HAP-1 (cell line): ENCODE measurements at regions of chr5 and their contacts with region 1.

Region 1: DNA sequence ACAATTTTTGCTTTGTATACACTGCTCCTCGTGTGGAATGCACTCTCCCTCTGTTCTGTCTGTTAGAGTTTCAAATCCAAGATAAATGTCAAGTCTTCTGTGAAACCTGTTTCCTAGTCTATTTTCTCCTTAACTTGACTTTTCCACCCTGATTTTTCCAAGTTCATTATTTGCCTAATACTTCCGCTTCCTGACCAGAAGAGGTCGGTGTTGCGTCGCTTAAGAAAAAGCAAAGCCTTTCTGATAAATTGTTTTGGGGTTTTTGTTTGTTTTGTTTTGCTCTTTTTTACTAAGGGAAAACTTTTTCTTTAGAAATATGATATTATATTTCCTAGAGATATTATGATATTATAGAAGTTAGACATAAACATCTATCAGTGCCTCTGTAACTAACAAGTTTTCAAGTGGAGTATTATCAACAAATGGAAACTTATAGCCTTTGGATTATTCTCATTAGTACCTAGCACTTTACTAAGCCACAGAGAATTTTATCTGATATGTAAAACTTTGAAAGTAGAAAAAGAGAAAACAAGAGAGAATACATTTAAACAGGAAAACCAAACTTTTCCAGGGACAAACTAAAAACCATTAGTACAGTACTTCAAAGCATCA is 55.8 kb downstream of the PHAX start:
- DNase-seq: peak; percentile 31 to 34
- H3K4me3 ChIP-seq: no peak overlapping the region
- H3K4me1 ChIP-seq: no peaks in the 10 kb centered on the region
- H3K27me3 ChIP-seq: no peaks in the 10 kb centered on the region

Region 2: DNA sequence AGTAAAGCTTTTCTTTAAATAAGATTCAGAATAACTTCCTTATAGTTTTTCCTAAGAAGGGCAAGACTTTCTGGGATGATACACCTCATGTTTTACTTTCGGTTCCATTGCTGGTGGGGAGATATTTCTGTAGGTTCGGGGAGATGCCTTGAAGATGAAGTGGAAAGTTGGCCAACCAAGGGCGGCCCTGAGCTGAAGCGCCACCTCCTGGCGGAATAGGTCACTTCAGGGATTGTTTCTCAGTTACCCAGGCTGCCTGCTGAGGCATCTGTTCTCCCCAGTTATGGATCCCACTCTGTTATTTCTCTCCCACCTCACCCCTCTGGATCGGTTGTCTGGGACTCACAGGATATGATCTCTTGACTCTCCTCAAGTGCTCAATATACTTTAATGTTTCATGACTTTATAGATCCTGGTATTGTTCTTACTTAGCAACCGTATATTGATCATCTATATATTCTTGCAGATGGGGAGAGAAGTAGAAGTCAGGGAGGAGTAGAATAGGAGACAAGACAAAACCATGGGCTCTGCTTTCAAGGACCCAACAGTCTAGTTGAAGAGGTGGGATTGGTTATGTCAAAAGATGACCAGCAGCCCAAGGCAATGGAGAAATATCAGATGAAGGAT is 657.5 kb after region 1 on chr5:
- in situ Hi-C with region 1: loop called (anchors 10 kb)
- DNase-seq: peak; percentile 20 to 77
- H3K4me3 ChIP-seq: no peak overlapping the region
- H3K4me1 ChIP-seq: no peaks in the 10 kb centered on the region
- H3K27me3 ChIP-seq: peaks cover 14% of the 10 kb centered on the region; the same call in 1 of the 2 replicates

Region 3: DNA sequence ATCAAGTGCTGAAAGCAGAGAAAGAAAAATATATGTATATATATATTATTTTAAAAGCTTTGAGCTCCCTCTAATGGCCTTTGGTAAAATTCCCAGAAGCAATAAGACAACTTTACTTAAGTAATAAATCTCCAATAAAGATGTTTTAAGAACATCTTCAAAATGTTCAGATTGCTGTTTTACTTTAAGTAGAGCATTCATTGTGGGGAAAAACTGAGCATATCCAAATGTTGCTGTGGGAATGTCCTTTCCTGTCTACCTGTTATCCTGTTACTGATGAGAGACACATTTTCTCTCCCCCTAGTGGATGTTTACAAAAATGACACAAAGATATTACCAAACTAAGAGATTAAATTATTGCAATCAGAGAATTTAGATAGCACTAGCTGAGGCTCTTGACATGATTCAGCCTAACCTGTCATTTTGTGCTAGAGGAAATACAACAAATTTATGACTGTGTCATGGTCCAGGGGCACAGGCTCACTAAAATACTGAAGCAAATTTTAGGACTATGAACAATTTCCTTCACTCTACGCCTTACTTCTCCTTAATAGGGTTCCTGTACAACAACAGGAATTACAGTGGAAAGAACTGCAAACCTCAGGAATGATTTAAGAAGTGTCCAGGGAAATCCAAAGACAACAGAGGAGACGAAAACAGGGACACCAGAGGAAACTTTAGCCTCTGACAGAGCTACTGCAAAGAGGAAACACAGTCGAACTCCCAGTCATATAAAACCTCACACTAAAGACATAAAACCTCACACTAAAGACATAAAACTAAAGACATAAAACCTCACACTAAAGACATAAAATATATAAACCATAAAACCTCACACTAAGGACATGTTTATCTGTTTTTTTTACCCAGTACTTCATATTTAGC is 836.6 kb after region 1 on chr5:
- in situ Hi-C with region 1: loop called (anchors 25 kb)
- DNase-seq: peak in 1 of 2 experiments; percentile 55
- H3K4me3 ChIP-seq: no peak overlapping the region
- H3K4me1 ChIP-seq: no peaks in the 10 kb centered on the region
- H3K27me3 ChIP-seq: peaks cover 16% of the 10 kb centered on the region